IMR-90 (cell line): ENCODE measurements at regions of chrX and their contacts with region 1.

Region 1: DNA sequence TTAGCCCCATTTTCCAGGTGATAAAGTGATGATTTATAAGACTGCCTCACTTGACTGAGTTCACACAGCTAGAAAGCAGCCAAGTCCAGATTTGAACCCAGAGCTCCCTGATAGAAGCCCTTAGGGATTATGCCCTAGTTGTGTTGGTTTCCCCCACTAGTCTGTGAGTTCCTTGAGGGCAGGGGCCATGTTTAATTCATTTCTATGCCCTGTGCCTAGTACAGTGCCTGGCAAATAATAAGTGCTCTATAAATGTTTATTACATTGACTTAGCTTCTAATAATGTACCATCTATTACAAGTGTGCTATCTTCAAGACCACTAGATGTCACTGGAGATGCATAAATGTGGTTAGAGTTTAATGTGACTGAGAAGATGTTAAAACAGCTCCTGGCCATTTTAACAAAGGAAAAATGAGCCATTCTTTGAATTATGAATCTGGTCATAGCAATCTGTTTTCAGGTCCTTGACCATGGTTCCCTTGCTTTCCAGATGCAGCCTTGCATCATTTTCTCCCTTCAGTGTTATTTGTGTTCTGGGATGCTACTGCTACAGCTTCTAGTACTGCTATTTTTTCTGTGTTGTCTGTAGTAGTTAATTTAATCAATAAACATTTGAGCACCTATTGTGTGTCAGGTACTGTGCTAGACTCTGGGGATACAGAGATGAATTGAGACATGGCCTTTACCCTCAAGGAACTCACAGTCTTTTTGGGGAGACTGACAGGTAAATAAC is 43.2 kb downstream of the SLC9A6 start:
- DNase-seq: peak; percentile 74
- ATAC-seq: peak; percentile 75
- H3K4me3 ChIP-seq: no peak overlapping the region
- H3K27ac ChIP-seq: no peak overlapping the region
- H3K4me1 ChIP-seq: peaks cover 9% of the 10 kb centered on the region
- H3K27me3 ChIP-seq: no peaks in the 10 kb centered on the region
- CTCF ChIP-seq: peak; percentile 80
- POLR2A ChIP-seq: no peak
- RAD21 ChIP-seq: peak; percentile 81

Region 2: GRCh38 chrX:136162831-136163570 is 134.6 kb after region 1 on chrX:
- CTCF ChIA-PET with region 1: interaction called, 19 read pairs
- POLR2A ChIA-PET with region 1: no interaction called
- dilution Hi-C with region 1: no loop called
- in situ Hi-C with region 1: loop called (anchors 5 kb)
- intact Hi-C with region 1: loop called (anchors 1 kb)
- DNase-seq: peak; percentile 43
- ATAC-seq: peak; percentile 80
- H3K4me3 ChIP-seq: no peak overlapping the region
- H3K27ac ChIP-seq: no peak overlapping the region
- H3K4me1 ChIP-seq: peaks cover 13% of the 10 kb centered on the region; the same call in 1 of the 2 replicates
- H3K27me3 ChIP-seq: no peaks in the 10 kb centered on the region
- CTCF ChIP-seq: peak; percentile 72
- POLR2A ChIP-seq: no peak
- RAD21 ChIP-seq: peak; percentile 72

Region 3: GRCh38 chrX:136209016-136209738 is 180.8 kb after region 1 on chrX:
- CTCF ChIA-PET with region 1: interaction called, 13 read pairs
- POLR2A ChIA-PET with region 1: no interaction called
- dilution Hi-C with region 1: no loop called
- in situ Hi-C with region 1: loop called (anchors 5 kb)
- intact Hi-C with region 1: loop called (anchors 1 kb)
- DNase-seq: peak; percentile 56
- ATAC-seq: peak; percentile 59
- H3K4me3 ChIP-seq: no peak overlapping the region
- H3K27ac ChIP-seq: peak overlapping the region; percentile 5; the same call in 1 of the 2 replicates
- H3K4me1 ChIP-seq: peaks cover 6% of the 10 kb centered on the region
- H3K27me3 ChIP-seq: no peaks in the 10 kb centered on the region; the same call in 1 of the 2 replicates
- CTCF ChIP-seq: peak; percentile 64
- POLR2A ChIP-seq: no peak
- RAD21 ChIP-seq: peak; percentile 78

Region 4: DNA sequence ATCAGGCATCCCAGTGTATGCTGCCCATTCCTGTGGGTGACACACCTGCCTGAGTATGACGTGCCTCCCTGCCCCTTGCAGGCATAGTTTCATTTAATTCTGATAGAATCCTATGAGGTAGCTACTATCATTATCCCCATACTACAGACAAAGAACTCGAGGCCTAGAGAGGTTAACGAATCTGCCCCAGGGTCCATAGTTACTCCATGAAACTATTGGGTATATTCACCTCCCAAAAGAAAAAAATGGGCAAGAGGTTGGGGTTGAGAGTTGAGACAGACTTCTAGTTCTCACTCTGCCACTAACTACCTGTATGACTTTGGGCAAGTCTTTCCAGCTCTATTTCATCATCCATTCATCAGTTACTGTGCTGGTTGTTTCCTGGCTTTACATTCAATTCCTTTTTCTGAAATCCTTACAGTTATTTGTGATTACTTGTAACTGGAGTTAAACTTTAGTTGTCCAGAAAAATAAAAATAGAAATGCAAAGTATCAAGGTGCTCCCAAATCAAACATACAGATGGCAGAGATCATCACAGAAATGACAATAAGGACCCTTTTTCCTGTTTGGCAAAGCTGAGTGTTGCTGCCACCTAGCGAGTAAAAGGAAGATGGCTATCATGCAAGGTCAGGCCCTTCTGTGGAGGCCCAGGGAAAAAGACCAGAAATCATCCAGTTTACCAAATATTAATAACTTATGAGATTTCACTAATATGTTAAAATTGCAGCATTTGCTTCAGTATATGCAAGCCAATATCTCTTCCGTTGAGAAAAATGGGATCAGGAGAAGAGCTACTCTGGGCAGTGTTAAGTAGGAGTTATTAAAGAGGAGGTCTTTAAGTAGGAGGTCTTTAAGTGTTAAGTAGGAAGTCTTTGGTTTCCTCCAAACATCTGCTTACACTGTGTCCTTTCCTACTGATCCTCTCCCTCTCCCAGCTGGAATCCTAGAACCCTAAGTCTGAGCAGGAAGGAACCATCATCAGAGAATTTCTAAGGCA is 239.9 kb after region 1 on chrX:
- CTCF ChIA-PET with region 1: interaction called, 11 read pairs
- POLR2A ChIA-PET with region 1: no interaction called
- dilution Hi-C with region 1: no loop called
- in situ Hi-C with region 1: no loop called
- intact Hi-C with region 1: loop called (anchors 1 kb)
- DNase-seq: peak; percentile 50
- ATAC-seq: peak; percentile 76
- H3K4me3 ChIP-seq: no peak overlapping the region
- H3K27ac ChIP-seq: no peak overlapping the region
- H3K4me1 ChIP-seq: 0 out of 2 replicates have a peak, but pooled peaks cover 3% of the 10 kb centered on the region
- H3K27me3 ChIP-seq: no peaks in the 10 kb centered on the region
- CTCF ChIP-seq: peak; percentile 76
- POLR2A ChIP-seq: no peak
- RAD21 ChIP-seq: peak; percentile 84

Region 5: DNA sequence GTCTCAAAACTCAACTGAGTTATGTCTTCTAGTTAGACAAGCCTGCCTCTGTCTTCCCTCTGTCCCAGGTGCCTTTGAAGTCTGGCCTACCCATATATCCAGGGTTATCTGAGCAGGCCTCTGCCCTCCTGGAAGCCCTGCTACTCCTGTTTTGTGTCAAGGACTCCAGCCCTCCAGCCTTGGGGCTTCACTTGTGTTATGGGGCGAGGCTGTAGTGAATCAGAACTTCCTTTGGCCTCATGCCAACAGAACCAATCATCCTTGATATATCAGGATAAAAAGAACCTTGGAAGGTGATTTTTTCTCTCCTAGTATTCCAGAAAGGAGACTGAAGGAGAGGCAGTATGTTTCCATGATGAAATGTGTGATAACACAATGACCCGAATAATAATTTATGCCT is 263.4 kb after region 1 on chrX:
- CTCF ChIA-PET with region 1: no interaction called
- POLR2A ChIA-PET with region 1: no interaction called
- dilution Hi-C with region 1: no loop called
- in situ Hi-C with region 1: no loop called
- intact Hi-C with region 1: no loop called
- DNase-seq: no peak
- ATAC-seq: no peak
- H3K4me3 ChIP-seq: no peak overlapping the region
- H3K27ac ChIP-seq: no peak overlapping the region
- H3K4me1 ChIP-seq: no peaks in the 10 kb centered on the region
- H3K27me3 ChIP-seq: no peaks in the 10 kb centered on the region; the same call in 1 of the 2 replicates
- CTCF ChIP-seq: no peak
- POLR2A ChIP-seq: no peak
- RAD21 ChIP-seq: no peak

Region 6: GRCh38 chrX:136496770-136497598 is 468.6 kb after region 1 on chrX and contains the start of gene HTATSF1:
- CTCF ChIA-PET with region 1: no interaction called
- POLR2A ChIA-PET with region 1: no interaction called
- dilution Hi-C with region 1: no loop called
- in situ Hi-C with region 1: no loop called
- intact Hi-C with region 1: loop called (anchors 2 kb)
- DNase-seq: peak; percentile 79
- ATAC-seq: peak; percentile 89
- H3K4me3 ChIP-seq: peak within 1 kb of the TSS; percentile 89
- H3K27ac ChIP-seq: peak within 1 kb of the TSS; percentile 94
- H3K4me1 ChIP-seq: no peaks in the 10 kb centered on the region
- H3K27me3 ChIP-seq: peaks cover 2% of the 10 kb centered on the region
- CTCF ChIP-seq: no peak
- POLR2A ChIP-seq: 0 out of 2 replicates have a peak, but pooled peaks have one; percentile 57
- RAD21 ChIP-seq: no peak
- total RNA-seq, gene HTATSF1: 19.0 and 27.8 TPM in 2 replicates

Region 7: DNA sequence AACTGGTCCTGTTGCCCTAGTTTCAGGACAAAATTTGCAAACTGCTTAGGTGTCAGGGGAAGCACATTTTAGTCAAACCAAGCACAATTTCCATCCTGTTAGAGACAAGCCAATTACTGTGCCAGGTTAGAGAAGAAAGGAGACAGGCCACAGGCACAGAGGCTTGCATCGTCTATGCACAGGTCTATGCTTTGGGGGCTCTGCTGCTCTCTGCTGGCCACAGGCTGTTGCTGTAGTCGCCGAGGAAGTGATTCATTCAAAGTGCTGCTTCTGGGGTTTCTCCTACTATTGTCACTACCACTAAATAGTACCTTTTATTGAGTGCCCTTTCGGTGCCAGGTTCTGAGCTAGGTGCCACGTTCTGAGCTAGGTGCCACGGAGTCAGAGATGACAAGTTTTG is 549.1 kb after region 1 on chrX:
- CTCF ChIA-PET with region 1: interaction called, 3 read pairs
- POLR2A ChIA-PET with region 1: no interaction called
- dilution Hi-C with region 1: no loop called
- in situ Hi-C with region 1: no loop called
- intact Hi-C with region 1: loop called (anchors 5 kb)
- DNase-seq: peak; percentile 32
- ATAC-seq: peak; percentile 96
- H3K4me3 ChIP-seq: no peak overlapping the region
- H3K27ac ChIP-seq: no peak overlapping the region
- H3K4me1 ChIP-seq: no peaks in the 10 kb centered on the region
- H3K27me3 ChIP-seq: peaks cover 4% of the 10 kb centered on the region
- CTCF ChIP-seq: peak; percentile 61
- POLR2A ChIP-seq: no peak
- RAD21 ChIP-seq: peak; percentile 53

Region 8: GRCh38 chrX:137194164-137194563 is 1165.7 kb after region 1 on chrX:
- CTCF ChIA-PET with region 1: no interaction called
- POLR2A ChIA-PET with region 1: no interaction called
- dilution Hi-C with region 1: no loop called
- in situ Hi-C with region 1: no loop called
- intact Hi-C with region 1: loop called (anchors 10 kb)
- DNase-seq: peak; percentile 21
- ATAC-seq: peak; percentile 70
- H3K4me3 ChIP-seq: no peak overlapping the region
- H3K27ac ChIP-seq: no peak overlapping the region
- H3K4me1 ChIP-seq: no peaks in the 10 kb centered on the region
- H3K27me3 ChIP-seq: peaks cover 1% of the 10 kb centered on the region; the same call in 1 of the 2 replicates
- CTCF ChIP-seq: peak; percentile 61
- POLR2A ChIP-seq: no peak
- RAD21 ChIP-seq: peak; percentile 50